Panc1 (cell line): ENCODE measurements at regions of chr14 and their contacts with region 1.

Region 1: DNA sequence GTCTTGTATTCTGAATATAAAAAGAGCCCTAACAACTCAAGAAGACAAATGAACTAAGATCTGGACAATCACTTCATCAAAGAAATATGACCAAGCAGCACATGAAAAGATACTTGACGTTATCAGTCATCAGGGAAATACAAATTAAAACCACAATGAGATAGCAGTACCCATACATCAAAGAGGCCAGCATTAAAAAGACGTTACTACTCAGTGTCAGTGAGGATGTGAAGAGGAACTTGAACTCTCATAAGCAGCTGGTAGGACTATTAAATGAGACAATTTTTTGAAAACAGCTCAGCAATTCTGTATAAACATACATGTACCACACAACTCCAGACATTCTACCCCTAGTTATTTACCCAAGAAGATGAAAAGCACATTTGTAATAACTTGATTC is 55.9 kb downstream of the FERMT2 start:
- DNase-seq: no peak
- ATAC-seq: no peak
- H3K4me3 ChIP-seq: no peak overlapping the region
- H3K27ac ChIP-seq: no peak overlapping the region
- H3K4me1 ChIP-seq: no peaks in the 10 kb centered on the region; the same call in 1 of the 2 replicates
- H3K27me3 ChIP-seq: no peaks in the 10 kb centered on the region
- CTCF ChIP-seq: no peak

Region 2: DNA sequence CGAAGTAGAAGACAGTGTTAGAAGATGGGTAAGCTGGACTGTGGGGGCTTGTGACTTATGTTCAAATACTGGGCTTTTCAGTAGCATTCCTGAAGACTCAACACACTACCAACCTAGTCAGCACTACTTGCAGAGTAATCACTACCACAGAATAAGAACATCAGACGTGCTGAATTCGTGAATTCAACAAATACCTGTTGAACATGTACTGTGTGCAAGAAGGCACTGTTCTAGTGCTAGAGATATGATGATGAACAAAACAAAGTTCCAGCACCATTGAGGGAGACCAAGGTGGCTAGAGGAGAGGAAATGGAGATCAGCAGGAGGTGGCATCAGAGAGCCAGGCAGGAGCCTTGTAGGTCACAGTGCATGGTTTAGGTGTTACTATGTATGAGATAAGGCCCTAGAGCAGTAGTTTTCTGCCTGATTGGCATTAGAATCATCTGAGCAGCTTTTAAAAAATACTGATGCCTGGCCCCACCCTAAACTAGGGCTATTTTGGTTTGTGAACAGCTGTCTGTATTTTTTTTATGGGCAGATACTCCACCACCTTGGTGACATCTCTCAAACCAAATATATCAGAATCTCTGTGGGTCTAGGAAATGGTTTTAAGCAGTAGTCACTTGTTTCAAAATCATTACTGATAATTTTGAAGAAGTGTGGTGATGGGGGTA is 29.0 kb after region 1 on chr14:
- CTCF ChIA-PET with region 1: interaction called, 10 read pairs
- POLR2A ChIA-PET with region 1: interaction called, 11 read pairs
- in situ Hi-C with region 1: no loop called
- intact Hi-C with region 1: no loop called
- DNase-seq: no peak
- ATAC-seq: peak; percentile 80
- H3K4me3 ChIP-seq: no peak overlapping the region
- H3K27ac ChIP-seq: no peak overlapping the region; the same call in 1 of the 2 replicates
- H3K4me1 ChIP-seq: peaks cover 26% of the 10 kb centered on the region
- H3K27me3 ChIP-seq: no peaks in the 10 kb centered on the region
- CTCF ChIP-seq: peak; percentile 56

Region 3: GRCh38 chr14:53570411-53571387 is 675.7 kb after region 1 on chr14:
- CTCF ChIA-PET with region 1: no interaction called
- POLR2A ChIA-PET with region 1: no interaction called
- in situ Hi-C with region 1: no loop called
- intact Hi-C with region 1: no loop called
- DNase-seq: no peak
- ATAC-seq: no peak
- H3K4me3 ChIP-seq: no peak overlapping the region
- H3K27ac ChIP-seq: no peak overlapping the region
- H3K4me1 ChIP-seq: no peaks in the 10 kb centered on the region
- H3K27me3 ChIP-seq: no peaks in the 10 kb centered on the region
- CTCF ChIP-seq: no peak

Region 4: GRCh38 chr14:53613404-53614253 is 718.6 kb after region 1 on chr14:
- CTCF ChIA-PET with region 1: no interaction called
- POLR2A ChIA-PET with region 1: no interaction called
- in situ Hi-C with region 1: no loop called
- intact Hi-C with region 1: no loop called
- DNase-seq: peak; percentile 69
- ATAC-seq: peak; percentile 93
- H3K4me3 ChIP-seq: peak overlapping the region in 1 of 2 experiments; percentile 27; a peak in 2 of 4 replicates
- H3K27ac ChIP-seq: no peak overlapping the region
- H3K4me1 ChIP-seq: peaks cover 5% of the 10 kb centered on the region
- H3K27me3 ChIP-seq: no peaks in the 10 kb centered on the region
- CTCF ChIP-seq: no peak